Activated naive CD4-positive, alpha-beta T cell treated with anti-CD3 and anti-CD28 coated beads for 36 hours (primary cell): ENCODE measurements at regions of chrX and their contacts with region 1.

Region 1: DNA sequence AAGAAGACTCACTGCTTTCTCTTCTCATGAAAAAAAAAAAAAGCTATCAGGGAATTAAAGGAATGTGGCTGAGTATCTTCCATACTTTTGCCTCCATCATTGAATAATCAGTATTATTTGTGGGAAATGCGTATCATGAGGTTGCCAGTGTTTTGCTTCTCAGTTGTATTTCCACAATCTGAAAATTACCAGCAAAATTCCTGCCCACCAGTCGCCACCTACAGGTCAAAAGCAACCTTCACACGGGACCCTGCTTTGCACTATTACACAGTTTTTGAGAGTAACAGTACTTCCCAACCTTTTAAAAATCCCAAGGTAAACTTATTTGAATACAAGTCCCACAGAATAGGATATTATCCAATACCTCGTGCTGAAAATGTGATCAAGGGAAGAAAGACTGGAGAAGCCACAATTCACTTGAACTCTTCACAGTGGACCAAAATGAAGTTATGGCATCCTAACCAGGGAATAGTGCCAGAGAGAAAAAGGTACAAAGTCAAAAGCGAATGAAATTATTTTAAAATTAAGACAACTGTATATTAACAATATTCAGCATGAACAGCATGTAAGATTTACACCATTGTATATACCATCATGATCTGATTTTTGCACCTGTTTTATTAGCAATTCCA is 30.4 kb downstream of the PGRMC1 start:
- DNase-seq: peak; percentile 25
- H3K4me3 Mint-ChIP-seq: no peak overlapping the region
- H3K27ac Mint-ChIP-seq: no peak overlapping the region
- H3K4me1 Mint-ChIP-seq: no peaks in the 10 kb centered on the region
- H3K27me3 Mint-ChIP-seq: peaks cover 2% of the 10 kb centered on the region

Region 2: DNA sequence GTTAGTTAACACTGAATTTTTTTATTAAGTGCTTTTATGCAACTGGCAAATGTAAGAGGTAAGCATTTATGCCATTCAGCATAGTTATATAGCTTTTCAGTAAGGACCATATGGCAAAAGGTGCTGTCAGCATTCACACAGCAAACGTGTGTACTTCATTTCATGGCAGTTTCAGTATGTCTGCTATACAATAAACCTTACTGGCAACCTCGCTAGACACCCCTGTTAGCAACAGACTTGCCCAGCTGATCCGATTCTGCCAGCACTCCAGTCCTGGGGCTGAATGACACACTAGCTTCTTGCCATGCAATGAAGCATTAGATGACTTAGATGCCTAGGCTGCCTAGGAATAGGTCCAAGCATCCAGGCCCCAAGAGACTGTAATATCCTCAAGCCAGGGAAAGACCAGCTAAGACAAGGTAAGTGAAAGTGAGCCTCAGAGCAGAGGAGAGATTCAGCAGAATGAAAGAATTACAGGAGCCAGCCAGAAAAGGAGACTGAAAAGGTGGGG is 818.2 kb before region 1 on chrX:
- CTCF ChIA-PET with region 1: no interaction called
- intact Hi-C with region 1: no loop called
- DNase-seq: no peak
- H3K4me3 Mint-ChIP-seq: no peak overlapping the region
- H3K27ac Mint-ChIP-seq: no peak overlapping the region
- H3K4me1 Mint-ChIP-seq: no peaks in the 10 kb centered on the region
- H3K27me3 Mint-ChIP-seq: no peaks in the 10 kb centered on the region

Region 3: GRCh38 chrX:119145241-119145653 is 121.2 kb before region 1 on chrX:
- CTCF ChIA-PET with region 1: no interaction called
- intact Hi-C with region 1: loop called (anchors 10 kb)
- DNase-seq: peak; percentile 5
- H3K4me3 Mint-ChIP-seq: no peak overlapping the region
- H3K27ac Mint-ChIP-seq: no peak overlapping the region
- H3K4me1 Mint-ChIP-seq: no peaks in the 10 kb centered on the region
- H3K27me3 Mint-ChIP-seq: no peaks in the 10 kb centered on the region

Region 4: GRCh38 chrX:119194621-119195020 is 71.9 kb before region 1 on chrX:
- CTCF ChIA-PET with region 1: no interaction called
- intact Hi-C with region 1: no loop called
- DNase-seq: no peak
- H3K4me3 Mint-ChIP-seq: no peak overlapping the region
- H3K27ac Mint-ChIP-seq: no peak overlapping the region
- H3K4me1 Mint-ChIP-seq: no peaks in the 10 kb centered on the region
- H3K27me3 Mint-ChIP-seq: no peaks in the 10 kb centered on the region